HEK293T (cell line): ENCODE measurements at regions of chr11 and their contacts with region 1.

Region 1: GRCh38 chr11:65471410-65471762 is 27.5 kb upstream of the MALAT1 start:
- DNase-seq: no peak

Region 2: GRCh38 chr11:65040847-65041621 is 430.4 kb before region 1 on chr11 and contains the start of gene SAC3D1:
- CTCF ChIA-PET with region 1: no interaction called
- POLR2A ChIA-PET with region 1: no interaction called
- DNase-seq: peak; percentile 91

Region 3: GRCh38 chr11:65375012-65375411 is 96.4 kb before region 1 on chr11:
- CTCF ChIA-PET with region 1: interaction called, 9 read pairs
- POLR2A ChIA-PET with region 1: interaction called, 11 read pairs
- DNase-seq: no peak

Region 4: DNA sequence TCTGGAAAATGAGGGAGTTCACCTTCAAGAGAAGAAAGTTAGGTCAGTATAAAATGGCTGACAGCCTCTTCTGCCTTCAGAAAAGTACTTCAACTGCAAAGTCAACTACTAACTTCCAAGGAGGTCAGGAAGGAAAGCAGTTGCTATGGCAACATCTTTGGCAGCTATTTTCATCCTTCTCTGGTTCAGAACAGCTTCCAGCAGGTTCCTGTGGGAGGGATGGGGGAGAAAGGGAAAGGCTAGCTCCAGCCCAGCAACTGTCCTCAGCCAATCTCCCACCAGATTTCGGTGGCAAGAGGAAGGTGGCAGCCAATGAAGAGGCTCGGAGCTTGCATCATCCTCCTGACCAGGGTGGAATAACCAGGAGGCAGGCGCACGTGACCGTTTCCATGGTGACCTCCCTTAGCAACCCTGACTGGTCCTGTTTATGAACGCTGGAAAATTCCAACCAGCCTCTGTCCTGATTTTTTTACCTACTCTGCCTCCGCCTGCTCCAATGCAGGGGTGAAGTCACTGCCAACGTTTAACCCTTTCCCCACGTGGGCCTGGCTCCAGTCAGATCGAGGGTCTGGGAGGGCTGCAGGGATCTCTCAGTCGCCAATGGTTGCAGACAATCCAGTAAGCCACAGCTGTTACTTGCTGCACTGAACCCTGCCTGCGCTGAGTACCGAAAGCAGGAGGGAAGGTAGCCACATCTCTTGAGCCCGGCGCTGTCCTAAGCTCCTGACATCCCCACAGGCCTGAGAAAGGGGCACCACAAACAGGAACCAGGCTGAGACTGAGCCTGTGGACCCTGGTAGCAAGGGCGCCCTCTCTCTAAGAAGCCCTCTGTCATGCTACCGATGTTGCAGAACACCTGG is 16.3 kb after region 1 on chr11:
- CTCF ChIA-PET with region 1: interaction called, 13 read pairs
- POLR2A ChIA-PET with region 1: interaction called, 1,783 read pairs
- DNase-seq: peak; percentile 94